A673 (cell line): ENCODE measurements at regions of chr1 and their contacts with region 1.

Region 1: GRCh38 chr1:176773038-176773437 is 310.1 kb downstream of the PAPPA2 start:
- DNase-seq: no peak
- H3K4me3 ChIP-seq: no peak overlapping the region
- H3K27ac ChIP-seq: no peak overlapping the region
- H3K4me1 ChIP-seq: no peaks in the 10 kb centered on the region
- H3K27me3 ChIP-seq: peaks cover 17% of the 10 kb centered on the region
- CTCF ChIP-seq: no peak

Region 2: GRCh38 chr1:176691251-176692228 is 81.5 kb before region 1 on chr1:
- CTCF ChIA-PET with region 1: no interaction called
- POLR2A ChIA-PET with region 1: no interaction called
- intact Hi-C with region 1: no loop called
- DNase-seq: peak; percentile 54
- H3K4me3 ChIP-seq: no peak overlapping the region
- H3K27ac ChIP-seq: no peak overlapping the region
- H3K4me1 ChIP-seq: no peaks in the 10 kb centered on the region
- H3K27me3 ChIP-seq: peaks cover 4% of the 10 kb centered on the region
- CTCF ChIP-seq: peak; percentile 80

Region 3: DNA sequence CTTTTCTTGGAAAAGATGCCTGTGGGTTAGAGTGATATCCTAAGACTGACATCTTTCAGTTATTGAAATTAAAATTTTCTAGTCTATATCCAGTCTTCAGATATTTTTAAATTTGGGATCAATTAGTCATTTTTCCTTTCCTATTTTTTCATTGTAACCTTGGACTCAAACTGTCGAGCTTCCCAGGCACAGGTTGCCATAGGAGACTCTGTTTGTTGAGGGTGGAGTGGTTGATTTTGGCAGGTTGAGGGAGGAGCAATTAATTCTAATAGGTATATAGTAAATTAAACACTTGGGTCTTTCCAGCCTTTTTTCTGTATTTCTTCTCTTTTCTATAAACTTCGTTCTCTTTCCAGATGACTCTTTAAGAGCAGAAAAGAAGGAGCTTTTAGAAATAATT is 64.7 kb after region 1 on chr1:
- CTCF ChIA-PET with region 1: no interaction called
- POLR2A ChIA-PET with region 1: no interaction called
- intact Hi-C with region 1: loop called (anchors 10 kb)
- DNase-seq: no peak
- H3K4me3 ChIP-seq: no peak overlapping the region
- H3K27ac ChIP-seq: no peak overlapping the region
- H3K4me1 ChIP-seq: no peaks in the 10 kb centered on the region
- H3K27me3 ChIP-seq: peaks cover 10% of the 10 kb centered on the region
- CTCF ChIP-seq: no peak

Region 4: GRCh38 chr1:177385760-177386698 is 613.0 kb after region 1 on chr1:
- CTCF ChIA-PET with region 1: no interaction called
- POLR2A ChIA-PET with region 1: no interaction called
- intact Hi-C with region 1: no loop called
- DNase-seq: peak; percentile 75
- H3K4me3 ChIP-seq: no peak overlapping the region
- H3K27ac ChIP-seq: no peak overlapping the region
- H3K4me1 ChIP-seq: no peaks in the 10 kb centered on the region
- H3K27me3 ChIP-seq: no peaks in the 10 kb centered on the region
- CTCF ChIP-seq: no peak